ENCODE measurements at regions of chr6 and their contacts with region 1.

Region 1: DNA sequence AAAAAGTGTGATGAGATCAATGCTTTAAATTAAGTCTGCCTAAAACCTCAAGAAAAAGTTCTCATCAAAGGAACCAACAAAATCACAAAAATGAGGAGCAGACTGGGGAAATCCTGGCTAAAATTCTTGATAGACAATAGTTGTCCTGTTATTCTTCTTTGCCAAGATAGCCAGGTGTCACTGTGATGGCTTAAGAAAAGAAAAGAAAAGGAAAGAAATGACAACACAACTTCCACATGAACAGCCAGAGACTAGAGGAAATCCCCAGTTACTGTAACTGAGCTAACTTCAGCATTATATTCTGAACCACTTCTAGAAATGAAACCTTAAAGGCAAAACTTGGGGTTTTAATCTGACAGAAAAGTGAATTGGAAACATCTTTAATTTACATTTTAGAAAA is 129.6 kb downstream of the CD24 start:
- DNase-seq: no peak
- ATAC-seq: no peak
- H3K4me3 ChIP-seq: no peak overlapping the region
- H3K4me3 Mint-ChIP-seq: no peak overlapping the region
- H3K27ac ChIP-seq: no peak overlapping the region
- H3K27ac Mint-ChIP-seq: no peak overlapping the region
- H3K4me1 ChIP-seq: no peaks in the 10 kb centered on the region
- H3K4me1 Mint-ChIP-seq: no peaks in the 10 kb centered on the region
- H3K27me3 ChIP-seq: no peaks in the 10 kb centered on the region
- H3K27me3 Mint-ChIP-seq: peaks cover 15% of the 10 kb centered on the region
- CTCF ChIP-seq: no peak

Region 2: DNA sequence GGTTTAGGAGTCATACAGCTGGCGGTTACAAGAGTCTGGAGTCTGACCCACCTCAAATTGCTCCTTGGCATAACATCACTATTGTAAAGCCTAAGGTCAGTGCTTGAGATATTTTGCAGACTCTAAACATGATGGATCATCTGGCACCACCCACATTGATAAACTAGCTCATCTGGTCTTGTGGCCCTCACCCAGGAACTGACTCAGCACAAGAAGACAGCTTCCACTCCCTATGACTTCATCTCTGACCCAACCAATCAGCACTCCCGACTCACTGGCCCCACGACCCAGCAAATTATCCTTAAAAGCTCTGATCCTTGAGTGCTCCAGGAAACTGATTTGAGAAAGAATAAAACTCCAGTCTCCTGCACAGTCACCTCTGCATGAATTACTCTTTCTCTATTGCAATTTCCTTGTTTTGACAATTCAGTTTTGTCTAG is 13.7 kb after region 1 on chr6:
- CTCF ChIA-PET with region 1: no interaction called
- POLR2A ChIA-PET with region 1: no interaction called
- intact Hi-C with region 1: no loop called
- DNase-seq: no peak
- ATAC-seq: no peak
- H3K4me3 ChIP-seq: no peak overlapping the region
- H3K4me3 Mint-ChIP-seq: no peak overlapping the region
- H3K27ac ChIP-seq: no peak overlapping the region
- H3K27ac Mint-ChIP-seq: no peak overlapping the region
- H3K4me1 ChIP-seq: no peaks in the 10 kb centered on the region
- H3K4me1 Mint-ChIP-seq: no peaks in the 10 kb centered on the region
- H3K27me3 ChIP-seq: no peaks in the 10 kb centered on the region
- H3K27me3 Mint-ChIP-seq: peaks cover 8% of the 10 kb centered on the region
- CTCF ChIP-seq: no peak

Region 3: GRCh38 chr6:106963544-106963943 is 118.6 kb after region 1 on chr6:
- CTCF ChIA-PET with region 1: no interaction called
- POLR2A ChIA-PET with region 1: no interaction called
- intact Hi-C with region 1: loop called in 1 of 2 experiments (anchors 5 kb)
- DNase-seq: no peak
- ATAC-seq: no peak
- H3K4me3 ChIP-seq: no peak overlapping the region
- H3K4me3 Mint-ChIP-seq: no peak overlapping the region
- H3K27ac ChIP-seq: no peak overlapping the region
- H3K27ac Mint-ChIP-seq: no peak overlapping the region
- H3K4me1 ChIP-seq: no peaks in the 10 kb centered on the region
- H3K4me1 Mint-ChIP-seq: no peaks in the 10 kb centered on the region
- H3K27me3 ChIP-seq: no peaks in the 10 kb centered on the region
- H3K27me3 Mint-ChIP-seq: peaks cover 20% of the 10 kb centered on the region
- CTCF ChIP-seq: no peak

Measured in CD8-positive, alpha-beta T cell (primary cell).